ENCODE measurements at regions of chr14 and their contacts with region 1.

Region 1: DNA sequence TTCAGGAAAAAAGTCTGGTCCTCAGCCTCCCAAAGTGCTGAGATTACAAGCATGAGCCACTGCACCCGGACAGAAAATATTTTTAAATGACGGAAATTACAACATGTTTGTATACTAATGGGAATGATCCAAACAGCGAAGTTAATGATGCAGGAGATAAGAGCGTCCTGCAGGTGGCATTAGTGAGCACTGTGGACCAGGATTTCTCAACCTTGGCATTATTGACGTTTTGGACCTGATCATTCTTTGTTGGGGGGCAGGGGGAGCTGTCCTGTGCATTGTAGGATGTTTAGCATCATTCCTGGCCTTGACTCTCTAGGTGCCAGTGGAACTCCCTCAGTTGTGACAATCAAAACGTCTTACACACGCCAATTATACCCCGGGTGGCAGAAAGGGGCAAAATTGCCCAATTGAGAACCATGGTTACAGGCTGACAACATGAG is 34.1 kb downstream of the SCFD1 start:
- DNase-seq: peak; percentile 68
- ATAC-seq: peak; percentile 84
- H3K4me3 ChIP-seq: no peak overlapping the region
- H3K27ac ChIP-seq: no peak overlapping the region
- H3K4me1 ChIP-seq: peaks cover 10% of the 10 kb centered on the region; the same call in 1 of the 2 replicates
- H3K27me3 ChIP-seq: no peaks in the 10 kb centered on the region
- CTCF ChIP-seq: peak; percentile 92
- EP300 ChIP-seq: 0 out of 4 replicates have a peak, but pooled peaks of 1 of the 2 experiments have one; percentile 17
- POLR2A ChIP-seq: no peak
- RAD21 ChIP-seq: peak; percentile 61

Region 2: DNA sequence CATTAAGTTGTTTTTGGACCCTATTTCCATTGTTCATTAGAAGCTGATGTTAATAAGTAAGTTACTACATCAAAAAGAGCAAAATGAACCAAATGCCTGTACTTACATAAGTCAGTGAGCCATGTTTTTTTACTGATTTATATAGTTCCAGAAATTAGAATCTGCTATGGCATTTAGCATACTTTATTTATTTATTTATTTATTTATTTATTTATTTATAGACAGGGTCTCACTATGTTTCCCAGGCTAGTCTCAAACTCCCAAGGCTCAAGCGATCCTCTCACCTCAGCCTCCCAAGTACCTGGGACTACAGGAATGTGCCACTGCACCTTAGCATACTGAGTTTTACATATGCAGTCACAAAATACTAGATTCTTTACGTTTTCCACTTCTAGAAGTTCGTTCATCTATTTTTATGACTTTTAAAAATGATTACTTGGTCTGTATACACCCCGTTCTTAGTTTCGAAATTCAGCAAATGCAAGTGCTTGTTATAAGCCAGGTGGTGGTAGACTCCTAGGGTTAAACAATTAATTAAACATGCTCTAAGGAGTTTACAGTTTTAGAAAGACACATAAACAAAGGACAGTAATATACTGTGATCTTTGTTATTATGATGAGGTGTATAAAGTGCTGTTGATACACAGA is 35.7 kb after region 1 on chr14:
- CTCF ChIA-PET with region 1: interaction called, 12 read pairs
- POLR2A ChIA-PET with region 1: no interaction called
- in situ Hi-C with region 1: no loop called
- intact Hi-C with region 1: loop called (anchors 5 kb)
- DNase-seq: no peak
- ATAC-seq: no peak
- H3K4me3 ChIP-seq: peak overlapping the region in 2 of 3 experiments; percentile 69 to 70; a peak in 3 of 6 replicates
- H3K27ac ChIP-seq: peak overlapping the region; percentile 74
- H3K4me1 ChIP-seq: peaks cover 21% of the 10 kb centered on the region
- H3K27me3 ChIP-seq: no peaks in the 10 kb centered on the region
- CTCF ChIP-seq: no peak
- EP300 ChIP-seq: no peak
- POLR2A ChIP-seq: no peak
- RAD21 ChIP-seq: no peak

Region 3: DNA sequence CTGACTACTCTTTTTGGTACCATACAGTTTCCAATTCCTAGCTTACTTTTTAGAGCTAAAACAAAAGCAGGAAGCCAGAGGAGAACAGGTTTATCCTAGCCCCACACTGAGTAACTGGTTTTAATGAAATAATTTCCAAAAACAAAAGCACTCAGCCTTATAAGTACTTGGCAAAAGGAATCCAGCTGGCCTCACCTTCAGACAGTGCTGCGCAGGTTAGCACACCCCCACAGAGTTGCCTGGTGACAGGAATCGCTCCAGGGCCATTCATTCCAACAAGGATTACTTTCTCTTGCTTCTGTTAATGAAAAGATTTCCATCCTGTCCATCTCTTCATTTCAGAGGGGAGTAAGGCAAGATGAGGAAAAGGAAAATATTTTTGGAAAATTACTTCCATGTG is 50.5 kb after region 1 on chr14:
- CTCF ChIA-PET with region 1: no interaction called
- POLR2A ChIA-PET with region 1: no interaction called
- in situ Hi-C with region 1: no loop called
- intact Hi-C with region 1: loop called (anchors 2 kb)
- DNase-seq: no peak
- ATAC-seq: peak; percentile 24; the same call in 1 of the 3 replicates
- H3K4me3 ChIP-seq: no peak overlapping the region
- H3K27ac ChIP-seq: no peak overlapping the region
- H3K4me1 ChIP-seq: no peaks in the 10 kb centered on the region
- H3K27me3 ChIP-seq: no peaks in the 10 kb centered on the region
- CTCF ChIP-seq: no peak
- EP300 ChIP-seq: no peak
- POLR2A ChIP-seq: no peak
- RAD21 ChIP-seq: no peak

Region 4: DNA sequence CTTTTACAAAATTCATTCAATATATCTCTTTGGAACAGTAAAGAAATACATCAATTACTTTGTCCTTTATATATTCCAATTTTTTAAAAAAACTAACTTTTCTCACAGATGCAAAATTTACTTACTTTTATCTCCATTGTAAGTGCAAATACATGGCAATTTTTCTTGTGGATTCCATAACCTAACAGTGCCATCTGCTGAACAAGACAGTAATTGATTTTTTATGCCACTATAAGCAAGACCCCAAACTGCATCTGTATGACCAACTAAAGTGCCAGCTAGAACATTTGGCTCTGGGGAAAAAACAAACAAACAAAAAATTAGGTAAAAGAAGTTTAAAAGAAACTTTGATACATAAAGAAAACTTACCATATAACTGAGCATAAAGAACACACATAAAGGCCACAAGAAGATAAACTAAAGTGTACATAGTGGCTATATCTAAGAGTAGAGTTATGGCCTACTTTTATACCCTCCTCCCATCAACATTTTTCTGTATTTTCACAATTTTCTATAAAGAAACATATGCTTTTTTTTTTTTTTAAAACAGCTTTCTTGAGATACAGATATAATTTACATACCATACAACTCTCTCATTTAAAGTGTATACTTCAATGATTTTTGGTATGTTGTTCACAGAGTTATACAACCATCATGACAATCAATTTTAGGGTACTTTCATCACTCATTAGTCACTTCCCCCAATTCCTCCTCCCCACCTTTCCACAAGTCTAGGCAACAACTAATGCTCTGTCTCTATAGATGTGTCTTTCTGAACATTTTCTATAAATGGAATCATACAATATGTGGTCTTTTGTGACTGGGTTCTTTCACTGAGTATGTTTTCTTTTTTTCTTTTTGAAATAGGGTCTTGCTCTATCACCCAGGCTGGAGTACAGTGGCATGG is 250.8 kb after region 1 on chr14:
- CTCF ChIA-PET with region 1: interaction called, 10 read pairs
- POLR2A ChIA-PET with region 1: no interaction called
- in situ Hi-C with region 1: no loop called
- intact Hi-C with region 1: loop called (anchors 1 kb)
- DNase-seq: peak; percentile 58
- ATAC-seq: peak; percentile 37
- H3K4me3 ChIP-seq: no peak overlapping the region
- H3K27ac ChIP-seq: no peak overlapping the region
- H3K4me1 ChIP-seq: peaks cover 13% of the 10 kb centered on the region
- H3K27me3 ChIP-seq: no peaks in the 10 kb centered on the region
- CTCF ChIP-seq: peak; percentile 62
- EP300 ChIP-seq: no peak
- POLR2A ChIP-seq: no peak
- RAD21 ChIP-seq: peak; percentile 30; the same call in 1 of the 2 replicates